Adrenal gland (tissue), 19 donors: ENCODE measurements at regions of chr1 and their contacts with region 1.

Region 1: GRCh38 chr1:145823565-145824498 is at the starts of genes POLR3C and RNF115:
- DNase-seq: peak; percentile 87 to 95 (median 91)
- H3K4me3 ChIP-seq: peak within 1 kb of the TSS; percentile 12 to 72 (median 48)
- H3K27ac ChIP-seq: peak within 1 kb of the TSS; percentile 80 to 94 (median 86)
- H3K4me1 ChIP-seq: peaks cover 5 to 13% of the 10 kb centered on the region in 2 donors
- H3K27me3 ChIP-seq: no peaks in the 10 kb centered on the region
- CTCF ChIP-seq: peak in 1 of 6 experiments; percentile 7
- POLR2A ChIP-seq: peak; percentile 81 to 93
- total RNA-seq, gene POLR3C: 15.5 to 28.4 (median 20.8) TPM
- total RNA-seq, gene RNF115: 8.3 to 19.2 (median 13.0) TPM

Region 2: DNA sequence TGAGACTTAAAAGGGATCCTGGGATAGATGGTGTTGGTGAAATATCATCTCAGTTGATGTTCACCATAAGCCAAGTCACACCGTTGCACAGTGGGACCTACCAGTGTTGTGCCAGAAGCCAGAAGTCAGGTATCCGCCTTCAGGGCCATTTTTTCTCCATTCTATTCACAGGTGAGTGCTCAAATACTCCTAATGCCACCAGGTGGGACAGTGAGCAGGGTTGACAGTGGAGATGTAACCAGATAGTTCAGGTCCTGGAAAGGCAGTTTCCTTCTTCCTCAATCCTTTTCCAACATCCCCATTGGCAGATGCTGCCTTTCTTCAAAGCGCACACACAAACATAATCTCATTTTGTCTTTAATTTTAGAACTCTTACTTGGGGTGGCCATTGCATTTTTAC is 92.9 kb before region 1 on chr1:
- intact Hi-C with region 1: loop called in 1 of 2 experiments (anchors 10 kb)
- DNase-seq: no peak
- H3K4me3 ChIP-seq: no peak overlapping the region
- H3K27ac ChIP-seq: no peak overlapping the region
- H3K4me1 ChIP-seq: peaks cover 4 to 7% of the 10 kb centered on the region in 2 donors
- H3K27me3 ChIP-seq: no peaks in the 10 kb centered on the region
- CTCF ChIP-seq: no peak
- POLR2A ChIP-seq: no peak

Region 3: DNA sequence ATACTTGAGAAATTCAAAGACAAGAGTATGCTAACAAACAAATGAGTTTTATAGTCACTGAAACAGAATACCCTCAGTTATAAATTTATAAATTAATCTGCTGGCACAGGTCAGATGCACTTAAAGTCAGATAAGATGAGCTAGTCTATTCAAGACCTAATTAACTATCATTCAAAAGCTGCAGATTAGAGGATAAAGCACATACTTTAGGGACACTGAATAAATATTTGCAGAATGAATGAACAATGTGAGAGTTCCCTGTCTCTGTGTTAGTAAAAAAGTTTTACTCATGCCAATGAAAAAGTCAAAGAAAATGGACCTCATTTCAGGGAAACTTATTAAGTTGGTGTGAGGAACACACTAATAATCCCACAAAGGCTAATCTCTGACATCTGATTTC is 58.3 kb before region 1 on chr1:
- intact Hi-C with region 1: no loop called
- DNase-seq: no peak
- H3K4me3 ChIP-seq: no peak overlapping the region
- H3K27ac ChIP-seq: no peak overlapping the region
- H3K4me1 ChIP-seq: no peaks in the 10 kb centered on the region
- H3K27me3 ChIP-seq: no peaks in the 10 kb centered on the region
- CTCF ChIP-seq: no peak
- POLR2A ChIP-seq: no peak